IMR-90 (cell line): ENCODE measurements at regions of chr6 and their contacts with region 1.

Region 1: DNA sequence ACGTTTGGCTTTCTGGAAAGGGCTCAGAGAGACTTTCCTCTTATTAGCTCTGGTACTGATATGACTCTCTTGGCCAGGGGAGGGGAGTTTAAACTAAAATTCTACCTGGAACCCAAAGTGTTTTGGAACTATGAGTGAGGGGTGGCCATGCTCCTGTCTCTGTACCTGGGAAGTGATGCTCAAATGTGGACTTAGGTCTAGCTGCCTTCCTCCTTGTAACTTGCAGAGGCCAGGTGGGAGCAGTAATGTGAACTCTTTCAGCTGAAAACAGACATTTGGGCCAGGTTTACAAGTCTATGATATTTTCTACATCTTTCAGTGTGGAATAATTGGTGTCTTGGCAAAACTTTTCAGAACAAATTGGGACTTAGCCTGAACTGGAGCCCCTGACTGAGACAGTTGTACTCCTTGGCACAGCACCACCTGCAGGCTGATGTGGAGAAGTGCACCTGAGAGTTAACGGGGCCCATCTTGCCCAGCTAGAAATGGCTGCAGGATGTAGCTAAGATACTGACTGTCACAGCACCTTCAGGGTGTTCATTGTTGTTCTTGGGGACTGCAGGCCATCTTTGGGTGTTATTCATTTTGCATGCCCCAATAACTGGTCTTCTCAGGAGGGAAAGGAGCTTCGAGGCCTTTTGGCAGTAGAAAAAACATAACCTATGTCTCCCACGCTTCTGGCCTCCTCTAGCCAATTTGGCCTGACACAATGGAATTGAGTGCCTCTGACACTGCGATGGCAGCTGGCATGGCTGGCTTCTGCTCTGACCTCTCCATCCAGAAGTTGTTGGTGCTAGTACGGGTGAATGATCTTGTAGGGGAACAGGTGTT is 37.1 kb downstream of the CD109 start:
- DNase-seq: peak; percentile 78
- ATAC-seq: peak; percentile 99
- H3K4me3 ChIP-seq: no peak overlapping the region
- H3K27ac ChIP-seq: no peak overlapping the region
- H3K4me1 ChIP-seq: no peaks in the 10 kb centered on the region
- H3K27me3 ChIP-seq: no peaks in the 10 kb centered on the region
- CTCF ChIP-seq: peak; percentile 88
- POLR2A ChIP-seq: no peak; the same call in 1 of the 2 replicates
- RAD21 ChIP-seq: peak; percentile 91

Region 2: GRCh38 chr6:72724545-72724944 is 1008.5 kb before region 1 on chr6:
- CTCF ChIA-PET with region 1: no interaction called
- POLR2A ChIA-PET with region 1: no interaction called
- dilution Hi-C with region 1: no loop called
- in situ Hi-C with region 1: no loop called
- intact Hi-C with region 1: no loop called
- DNase-seq: no peak
- ATAC-seq: no peak
- H3K4me3 ChIP-seq: no peak overlapping the region
- H3K27ac ChIP-seq: no peak overlapping the region
- H3K4me1 ChIP-seq: no peaks in the 10 kb centered on the region
- H3K27me3 ChIP-seq: no peaks in the 10 kb centered on the region
- CTCF ChIP-seq: no peak
- POLR2A ChIP-seq: no peak
- RAD21 ChIP-seq: no peak

Region 3: GRCh38 chr6:73675466-73676098 is 57.5 kb before region 1 on chr6:
- CTCF ChIA-PET with region 1: interaction called, 32 read pairs
- POLR2A ChIA-PET with region 1: no interaction called
- dilution Hi-C with region 1: no loop called
- in situ Hi-C with region 1: loop called (anchors 5 kb)
- intact Hi-C with region 1: loop called (anchors 1 kb)
- DNase-seq: peak; percentile 81
- ATAC-seq: peak; percentile 100
- H3K4me3 ChIP-seq: no peak overlapping the region
- H3K27ac ChIP-seq: no peak overlapping the region
- H3K4me1 ChIP-seq: no peaks in the 10 kb centered on the region
- H3K27me3 ChIP-seq: no peaks in the 10 kb centered on the region
- CTCF ChIP-seq: peak; percentile 93
- POLR2A ChIP-seq: no peak
- RAD21 ChIP-seq: peak; percentile 95

Region 4: DNA sequence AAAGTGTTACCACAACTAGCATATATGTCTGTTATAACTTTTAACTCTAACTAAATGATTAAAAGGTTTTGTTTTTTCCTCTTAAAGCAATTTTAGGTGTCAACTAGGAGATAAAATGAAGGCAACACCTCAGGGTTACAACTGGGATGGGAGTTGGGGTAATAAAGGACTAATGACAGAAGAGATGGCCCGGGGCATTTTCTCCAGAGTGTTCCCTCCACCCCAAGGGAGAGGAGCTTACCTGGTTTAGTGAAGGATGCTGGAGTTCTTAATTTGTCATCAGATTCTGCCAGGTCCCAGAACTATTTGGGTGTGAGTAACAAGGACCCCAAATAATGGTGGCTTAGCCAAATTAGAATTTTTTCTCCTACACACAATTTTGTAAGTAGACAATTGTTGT is 223.2 kb after region 1 on chr6:
- CTCF ChIA-PET with region 1: interaction called, 10 read pairs
- POLR2A ChIA-PET with region 1: no interaction called
- dilution Hi-C with region 1: no loop called
- in situ Hi-C with region 1: no loop called
- intact Hi-C with region 1: no loop called
- DNase-seq: no peak
- ATAC-seq: no peak
- H3K4me3 ChIP-seq: no peak overlapping the region
- H3K27ac ChIP-seq: no peak overlapping the region
- H3K4me1 ChIP-seq: no peaks in the 10 kb centered on the region
- H3K27me3 ChIP-seq: no peaks in the 10 kb centered on the region
- CTCF ChIP-seq: no peak
- POLR2A ChIP-seq: no peak
- RAD21 ChIP-seq: no peak